Heart right ventricle (tissue), 16 donors: ENCODE measurements at regions of chr10 and their contacts with region 1.

Region 1: DNA sequence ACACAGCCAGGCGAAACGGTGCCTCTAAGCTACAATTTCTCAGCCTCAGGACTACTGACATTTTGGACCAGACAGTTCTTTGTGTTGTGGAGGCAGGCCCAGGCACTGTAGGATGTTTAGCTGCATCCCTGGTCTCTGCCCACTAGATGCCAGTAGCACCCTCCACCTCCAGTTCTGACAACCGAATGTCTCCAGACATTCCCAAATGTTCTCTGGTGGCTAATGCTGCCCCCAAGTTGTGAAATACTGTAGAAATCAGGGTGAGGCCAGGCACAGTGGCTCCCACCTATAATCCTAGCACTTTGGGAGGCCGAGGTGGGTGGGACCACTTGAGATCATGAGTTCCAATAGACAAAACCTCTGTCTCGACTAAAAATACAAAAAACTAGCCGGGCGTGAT is 18.2 kb downstream of the HNRNPF start:
- DNase-seq: no peak
- ATAC-seq: peak in 7 of 8 donors; percentile 55 to 77 (median 64)
- H3K4me3 ChIP-seq: no peak overlapping the region
- H3K27ac ChIP-seq: peak overlapping the region in 1 of 10 donors; percentile 33
- H3K4me1 ChIP-seq: peaks cover 4 to 65% (median 31%) of the 10 kb centered on the region in 9 donors
- H3K27me3 ChIP-seq: no peaks in the 10 kb centered on the region
- CTCF ChIP-seq: peak; percentile 15 to 65 (median 51)

Region 2: GRCh38 chr10:43361986-43362839 is 28.5 kb before region 1 on chr10:
- intact Hi-C with region 1: loop called in 1 of 10 experiments (anchors 1 kb)
- DNase-seq: peak; percentile 94 to 97
- ATAC-seq: peak; percentile 94 to 98 (median 97)
- H3K4me3 ChIP-seq: peak overlapping the region; percentile 2 to 67 (median 53)
- H3K27ac ChIP-seq: peak overlapping the region in 9 of 10 donors; percentile 28 to 90 (median 59)
- H3K4me1 ChIP-seq: peaks cover 0 to 16% (median 8%) of the 10 kb centered on the region in 9 donors
- H3K27me3 ChIP-seq: no peaks in the 10 kb centered on the region
- CTCF ChIP-seq: peak; percentile 15 to 71 (median 55)

Region 3: GRCh38 chr10:43453266-43453831 is 62.6 kb after region 1 on chr10:
- intact Hi-C with region 1: loop called in 1 of 10 experiments (anchors 5 kb)
- DNase-seq: no peak
- ATAC-seq: no peak
- H3K4me3 ChIP-seq: no peak overlapping the region
- H3K27ac ChIP-seq: peak overlapping the region in 1 of 10 donors; percentile 76
- H3K4me1 ChIP-seq: peaks cover 0 to 52% (median 17%) of the 10 kb centered on the region in 9 donors
- H3K27me3 ChIP-seq: no peaks in the 10 kb centered on the region
- CTCF ChIP-seq: no peak